Left ventricle myocardium inferior (tissue), 1 donor: ENCODE measurements at regions of chr2 and their contacts with region 1.

Region 1: GRCh38 chr2:181104512-181105115 is 124.2 kb downstream of the UBE2E3 start:
- DNase-seq: no peak
- H3K4me3 ChIP-seq: no peak overlapping the region
- H3K27ac ChIP-seq: no peak overlapping the region
- H3K4me1 ChIP-seq: no peaks in the 10 kb centered on the region
- H3K27me3 ChIP-seq: peaks cover 13% of the 10 kb centered on the region
- CTCF ChIP-seq: peak; percentile 71

Region 2: GRCh38 chr2:181008407-181008806 is 96.2 kb before region 1 on chr2:
- intact Hi-C with region 1: no loop called
- DNase-seq: no peak
- H3K4me3 ChIP-seq: no peak overlapping the region
- H3K27ac ChIP-seq: no peak overlapping the region
- H3K4me1 ChIP-seq: peaks cover 57% of the 10 kb centered on the region
- H3K27me3 ChIP-seq: no peaks in the 10 kb centered on the region
- CTCF ChIP-seq: no peak

Region 3: GRCh38 chr2:181466661-181467576 is 362.3 kb after region 1 on chr2:
- intact Hi-C with region 1: loop called (anchors 5 kb)
- DNase-seq: peak; percentile 59
- H3K4me3 ChIP-seq: no peak overlapping the region
- H3K27ac ChIP-seq: no peak overlapping the region
- H3K4me1 ChIP-seq: peaks cover 3% of the 10 kb centered on the region
- H3K27me3 ChIP-seq: no peaks in the 10 kb centered on the region
- CTCF ChIP-seq: peak; percentile 81

Region 4: GRCh38 chr2:181715033-181715630 is 610.5 kb after region 1 on chr2:
- intact Hi-C with region 1: loop called (anchors 10 kb)
- DNase-seq: peak; percentile 19
- H3K4me3 ChIP-seq: no peak overlapping the region
- H3K27ac ChIP-seq: no peak overlapping the region
- H3K4me1 ChIP-seq: no peaks in the 10 kb centered on the region
- H3K27me3 ChIP-seq: no peaks in the 10 kb centered on the region
- CTCF ChIP-seq: peak; percentile 74